ENCODE measurements at regions of chr3 and their contacts with region 1.

Region 1: DNA sequence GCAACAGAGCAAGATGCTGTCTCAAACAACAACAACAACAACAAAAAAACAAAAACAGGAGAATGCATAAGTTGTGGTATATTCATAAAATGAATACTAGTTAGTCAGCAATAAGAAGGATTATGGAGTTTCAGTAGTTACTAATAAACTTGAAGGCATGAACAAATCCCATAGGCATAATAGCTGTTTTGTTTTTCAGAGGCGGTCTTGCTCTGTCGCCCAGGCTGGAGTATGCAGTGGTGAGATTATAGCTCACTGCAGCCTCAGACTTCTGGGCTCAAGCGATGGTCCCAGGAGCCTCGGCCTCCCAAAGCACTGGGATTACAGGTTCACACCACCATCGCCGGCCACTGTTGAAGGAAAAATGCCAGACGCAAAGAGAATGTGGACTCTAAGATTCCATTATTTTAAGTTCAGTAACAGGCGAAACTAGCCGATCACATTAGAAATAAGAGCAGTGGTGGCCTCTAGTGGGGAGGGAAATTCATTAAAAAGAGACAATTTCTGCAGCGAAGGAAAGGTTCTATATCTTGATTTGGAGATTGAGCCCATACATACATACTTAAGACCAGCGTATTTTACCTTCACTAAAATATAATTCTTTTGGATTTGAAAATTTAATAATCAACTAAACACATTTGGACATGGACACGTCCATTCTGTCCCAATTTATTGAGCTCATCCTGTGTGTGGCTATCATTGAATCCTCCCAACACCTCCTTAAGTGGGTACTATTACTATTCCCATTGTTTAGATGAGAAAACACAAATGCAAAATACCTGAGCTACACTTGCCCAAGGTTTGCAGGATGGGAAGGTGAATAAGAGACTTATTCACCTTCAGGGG is 27.4 kb upstream of the HDAC11 start:
- DNase-seq: peak; percentile 25 to 43
- H3K4me3 ChIP-seq: peak overlapping the region; percentile 59; the same call in 1 of the 2 replicates
- H3K27ac ChIP-seq: peak overlapping the region; percentile 71
- H3K4me1 ChIP-seq: peaks cover 13% of the 10 kb centered on the region
- H3K27me3 ChIP-seq: no peaks in the 10 kb centered on the region
- CTCF ChIP-seq: peak; percentile 77

Region 2: DNA sequence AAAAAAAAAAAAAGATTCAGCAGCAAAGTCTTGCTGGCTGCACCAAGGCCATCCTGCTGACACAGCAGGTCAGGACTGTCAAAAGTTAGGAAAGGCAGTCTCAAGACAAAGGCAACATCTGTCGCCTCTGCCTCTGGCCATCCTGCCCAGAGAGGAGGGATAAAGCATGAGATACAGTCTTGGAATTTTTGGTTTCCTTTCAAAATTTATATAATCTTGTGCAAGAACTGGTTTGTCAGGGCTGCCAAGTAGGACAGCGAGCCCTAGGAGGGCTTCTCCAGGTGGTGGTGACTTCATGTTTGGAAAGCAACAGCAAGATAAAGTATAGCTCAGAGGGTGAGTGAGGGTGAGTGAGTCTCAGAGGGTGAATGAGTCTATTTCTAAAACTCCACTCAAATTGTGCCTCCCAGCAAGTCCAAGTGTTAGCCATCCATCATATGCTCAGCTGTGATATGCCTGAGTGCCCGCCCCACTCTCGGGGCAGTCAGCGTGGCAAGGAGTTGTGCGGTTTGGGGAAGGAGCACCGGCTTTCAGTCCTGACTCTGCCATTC is 599.4 kb before region 1 on chr3:
- CTCF ChIA-PET with region 1: no interaction called
- POLR2A ChIA-PET with region 1: no interaction called
- intact Hi-C with region 1: loop called (anchors 5 kb)
- DNase-seq: peak; percentile 55 to 88
- H3K4me3 ChIP-seq: no peak overlapping the region
- H3K27ac ChIP-seq: no peak overlapping the region
- H3K4me1 ChIP-seq: peaks cover 22% of the 10 kb centered on the region
- H3K27me3 ChIP-seq: no peaks in the 10 kb centered on the region; the same call in 1 of the 2 replicates
- CTCF ChIP-seq: no peak

Region 3: DNA sequence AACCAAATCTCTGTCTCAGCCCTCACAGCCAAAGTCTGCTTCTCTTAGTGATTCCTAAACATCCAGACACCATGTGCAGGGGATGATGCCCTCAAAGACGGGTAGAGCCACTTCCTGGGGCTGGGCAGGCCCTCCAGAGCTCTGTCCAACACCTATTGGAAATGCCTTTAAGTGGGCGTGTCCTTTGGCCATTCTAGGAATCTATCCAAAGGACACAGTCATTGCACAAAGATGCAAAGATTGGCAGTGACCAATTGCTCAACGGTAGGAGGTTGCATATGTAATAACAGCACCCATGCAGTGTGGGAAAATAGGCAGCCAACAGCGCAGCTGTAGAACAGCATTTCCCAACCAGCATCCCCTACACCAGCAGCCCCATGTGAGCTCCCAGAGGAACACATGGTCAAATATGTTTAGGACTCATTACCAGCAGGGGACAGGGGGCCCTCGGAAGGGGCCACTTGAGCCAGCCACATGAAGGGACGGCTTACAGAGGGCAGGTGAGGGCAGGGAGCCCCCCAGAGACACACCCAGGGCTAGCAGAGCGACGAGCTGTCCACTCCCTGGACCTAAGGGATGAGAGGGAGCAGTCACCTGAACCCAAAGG is 236.7 kb before region 1 on chr3:
- CTCF ChIA-PET with region 1: no interaction called
- POLR2A ChIA-PET with region 1: no interaction called
- intact Hi-C with region 1: loop called (anchors 10 kb)
- DNase-seq: peak; percentile 80 to 95
- H3K4me3 ChIP-seq: no peak overlapping the region
- H3K27ac ChIP-seq: peak overlapping the region; percentile 55
- H3K4me1 ChIP-seq: peaks cover 55% of the 10 kb centered on the region
- H3K27me3 ChIP-seq: no peaks in the 10 kb centered on the region
- CTCF ChIP-seq: no peak

Region 4: GRCh38 chr3:13414040-13414729 is 38.5 kb before region 1 on chr3:
- CTCF ChIA-PET with region 1: interaction called, 10 read pairs
- POLR2A ChIA-PET with region 1: no interaction called
- intact Hi-C with region 1: loop called (anchors 5 kb)
- DNase-seq: peak; percentile 44 to 49
- H3K4me3 ChIP-seq: 0 out of 2 replicates have a peak overlapping the region, but pooled peaks have one; percentile 4
- H3K27ac ChIP-seq: peak overlapping the region; percentile 67
- H3K4me1 ChIP-seq: peaks cover 66% of the 10 kb centered on the region
- H3K27me3 ChIP-seq: no peaks in the 10 kb centered on the region
- CTCF ChIP-seq: no peak

Region 5: DNA sequence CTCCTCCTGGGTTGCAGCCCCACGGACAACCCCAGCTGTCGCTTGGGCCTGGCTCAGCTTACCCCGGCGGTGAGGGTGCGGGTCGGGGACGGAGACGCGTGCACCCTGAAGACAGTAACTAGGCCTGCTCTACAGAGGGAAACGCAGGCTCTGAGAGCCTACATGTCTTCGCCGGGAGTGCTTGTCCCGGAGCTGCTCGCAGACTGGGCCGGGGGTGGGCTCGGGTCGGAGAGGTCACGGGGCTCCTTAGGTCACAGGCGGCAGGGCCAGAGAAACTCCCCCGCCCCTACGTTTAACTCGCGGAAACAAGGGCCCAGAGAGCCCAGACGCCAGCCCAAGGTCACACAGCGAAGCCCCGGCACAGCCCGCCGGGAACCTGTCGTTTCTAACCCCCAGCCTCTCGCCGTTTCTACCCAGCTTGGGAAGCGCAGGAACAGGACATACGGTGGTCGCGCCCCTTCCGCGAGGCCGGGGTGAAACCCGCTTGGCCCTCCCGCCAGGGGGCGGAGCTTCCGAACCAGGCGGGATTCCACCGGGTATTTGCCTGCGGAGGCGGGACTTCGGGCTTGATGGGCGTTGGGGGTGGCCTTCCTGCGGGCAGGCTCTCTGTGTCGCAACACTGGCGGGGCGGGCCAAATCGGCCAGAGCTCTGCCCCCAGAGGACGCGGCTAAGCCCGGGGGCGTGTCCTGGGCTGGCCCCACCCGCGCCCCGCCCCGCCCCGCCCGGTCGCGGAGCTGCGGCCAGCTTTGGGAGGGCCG is 27.0 kb after region 1 on chr3 and contains the start of gene HDAC11:
- CTCF ChIA-PET with region 1: interaction called, 23 read pairs
- POLR2A ChIA-PET with region 1: interaction called, 8 read pairs
- intact Hi-C with region 1: no loop called
- DNase-seq: peak; percentile 87 to 98
- H3K4me3 ChIP-seq: peak within 1 kb of the TSS; percentile 94
- H3K27ac ChIP-seq: no peak within 1 kb of the TSS
- H3K4me1 ChIP-seq: peaks cover 39% of the 10 kb centered on the region
- H3K27me3 ChIP-seq: no peaks in the 10 kb centered on the region
- CTCF ChIP-seq: peak; percentile 55
- total RNA-seq, gene HDAC11: 18.4 and 24.3 TPM in 2 replicates

Region 6: DNA sequence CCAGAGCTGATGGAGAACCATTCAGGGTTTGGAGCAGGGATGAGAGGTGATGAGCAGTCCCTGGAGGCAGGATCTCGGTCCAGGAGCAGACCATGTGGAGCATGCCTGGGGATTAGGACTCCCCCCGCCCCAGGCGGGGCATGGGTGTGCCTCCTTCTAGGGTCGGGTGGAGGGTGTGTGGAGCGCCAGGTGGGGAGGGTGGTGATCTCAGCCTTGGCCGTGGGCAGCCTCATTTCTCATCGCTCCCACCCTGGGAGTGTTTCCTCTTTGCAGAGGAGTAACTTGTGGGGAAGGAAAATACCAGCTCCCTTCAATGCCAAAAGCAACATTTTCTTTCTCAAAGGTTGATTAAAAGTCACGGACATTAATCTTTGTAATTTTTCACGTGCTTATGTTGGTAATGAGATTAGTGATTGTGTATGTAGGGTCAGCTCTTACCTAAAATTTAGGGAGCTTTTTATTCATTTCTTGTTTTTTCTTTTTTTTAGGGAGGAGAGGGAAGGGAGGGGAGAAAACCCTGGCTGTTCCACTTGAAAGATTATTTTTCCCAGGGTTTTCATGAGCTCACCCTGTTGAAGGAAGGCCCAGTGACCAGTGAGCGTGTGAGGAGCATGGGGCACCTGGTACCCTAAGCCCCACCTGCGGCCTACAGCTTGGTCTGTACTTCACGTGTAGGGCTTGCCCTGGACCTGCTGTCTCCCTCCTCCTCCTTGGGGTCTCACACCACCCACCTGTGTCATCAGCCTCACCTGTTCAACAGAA is 107.2 kb after region 1 on chr3:
- CTCF ChIA-PET with region 1: no interaction called
- POLR2A ChIA-PET with region 1: no interaction called
- intact Hi-C with region 1: no loop called
- DNase-seq: no peak
- H3K4me3 ChIP-seq: no peak overlapping the region
- H3K27ac ChIP-seq: no peak overlapping the region
- H3K4me1 ChIP-seq: no peaks in the 10 kb centered on the region
- H3K27me3 ChIP-seq: no peaks in the 10 kb centered on the region
- CTCF ChIP-seq: no peak